ENCODE measurements at regions of chr20 and their contacts with region 1.

Region 1: GRCh38 chr20:55242853-55243252 is 762.5 kb downstream of the CBLN4 start:
- DNase-seq: no peak
- ATAC-seq: peak in 1 of 2 donors; percentile 27

Region 2: DNA sequence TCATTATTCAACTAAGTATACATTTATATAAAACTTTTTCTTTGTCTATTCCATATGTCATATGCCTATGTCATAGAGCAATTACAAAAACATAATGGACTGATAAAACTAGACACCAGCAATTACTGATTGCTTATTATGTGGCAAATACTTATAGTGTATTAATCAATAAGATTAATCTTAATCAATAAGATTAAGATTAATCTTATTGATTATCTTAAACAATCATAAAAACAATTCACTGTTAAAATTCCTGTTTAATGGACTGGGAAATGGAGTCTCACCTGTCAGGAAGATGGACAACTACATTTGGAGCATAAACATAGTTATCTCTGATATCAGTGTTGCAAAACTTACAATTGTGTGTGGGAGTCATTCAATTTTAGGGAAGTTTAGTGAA is 52.2 kb after region 1 on chr20:
- intact Hi-C with region 1: loop called in 1 of 2 experiments (anchors 10 kb)
- DNase-seq: no peak
- ATAC-seq: no peak